Ascending aorta (tissue), 2 donors: ENCODE measurements at regions of chr16 and their contacts with region 1.

Region 1: DNA sequence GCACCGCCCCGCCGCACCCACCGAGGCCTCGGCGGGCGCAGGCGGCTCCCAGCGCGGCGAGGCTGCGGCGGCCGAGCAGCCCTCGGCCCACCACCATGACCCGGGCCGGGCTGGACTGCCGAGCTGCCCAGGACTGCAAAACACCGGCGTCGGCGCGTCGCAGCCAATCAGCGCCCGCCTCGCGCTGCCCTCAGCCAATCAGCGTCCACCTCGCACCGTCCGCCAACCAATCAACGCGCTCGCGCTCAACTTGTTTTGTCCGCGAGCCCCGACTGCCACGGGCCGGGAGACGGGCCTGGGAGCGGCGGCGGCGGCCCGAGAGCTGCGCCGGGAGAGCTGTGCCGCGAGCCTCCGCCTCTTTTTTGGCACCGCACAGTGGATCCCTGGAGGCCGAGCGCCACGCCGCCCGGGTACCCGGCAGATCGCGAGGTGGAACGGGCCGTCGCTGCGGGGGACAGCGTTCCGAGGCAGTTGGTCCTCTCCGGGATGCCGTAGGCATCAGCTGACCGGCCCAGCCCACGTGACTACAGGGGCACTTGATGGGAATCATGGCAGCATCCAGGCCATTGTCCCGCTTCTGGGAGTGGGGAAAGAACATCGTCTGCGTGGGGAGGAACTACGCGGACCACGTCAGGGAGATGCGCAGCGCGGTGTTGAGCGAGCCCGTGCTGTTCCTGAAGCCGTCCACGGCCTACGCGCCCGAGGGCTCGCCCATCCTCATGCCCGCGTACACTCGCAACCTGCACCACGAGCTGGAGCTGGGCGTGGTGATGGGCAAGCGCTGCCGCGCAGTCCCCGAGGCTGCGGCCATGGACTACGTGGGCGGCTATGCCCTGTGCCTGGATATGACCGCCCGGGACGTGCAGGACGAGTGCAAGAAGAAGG is at the starts of genes FAHD1 and HAGH:
- DNase-seq: peak; percentile 73 to 94
- H3K4me3 ChIP-seq: peak within 1 kb of the TSS; percentile 72 to 81
- H3K27ac ChIP-seq: peak within 1 kb of the TSS; percentile 70 to 72
- H3K4me1 ChIP-seq: peaks cover 12 to 37% of the 10 kb centered on the region in 2 donors
- H3K27me3 ChIP-seq: no peaks in the 10 kb centered on the region
- CTCF ChIP-seq: no peak
- total RNA-seq, gene FAHD1: 233 TPM
- total RNA-seq, gene HAGH: 177 TPM

Region 2: GRCh38 chr16:1772736-1773584 is 54.0 kb before region 1 on chr16 and contains the starts of genes EME2 and MRPS34:
- intact Hi-C with region 1: loop called (anchors 2 kb)
- DNase-seq: peak in 1 of 2 donors; percentile 88
- H3K4me3 ChIP-seq: peak within 1 kb of the TSS; percentile 98 to 99
- H3K27ac ChIP-seq: peak within 1 kb of the TSS; percentile 95
- H3K4me1 ChIP-seq: peaks cover 19 to 28% of the 10 kb centered on the region in 2 donors
- H3K27me3 ChIP-seq: no peaks in the 10 kb centered on the region
- CTCF ChIP-seq: peak; percentile 68 to 82 (median 75)
- total RNA-seq, gene EME2: 25.3 TPM
- total RNA-seq, gene MRPS34: 170 TPM

Region 3: GRCh38 chr16:1782352-1783091 is 44.4 kb before region 1 on chr16 and contains the starts of genes NUBP2 and SPSB3:
- intact Hi-C with region 1: loop called (anchors 2 kb)
- DNase-seq: peak; percentile 99 to 100
- H3K4me3 ChIP-seq: peak within 1 kb of the TSS; percentile 84 to 99
- H3K27ac ChIP-seq: peak within 1 kb of the TSS; percentile 77 to 83
- H3K4me1 ChIP-seq: peaks cover 11 to 26% of the 10 kb centered on the region in 2 donors
- H3K27me3 ChIP-seq: no peaks in the 10 kb centered on the region
- CTCF ChIP-seq: no peak
- total RNA-seq, gene NUBP2: 182 TPM
- total RNA-seq, gene SPSB3: 159 TPM

Region 4: GRCh38 chr16:1942810-1943726 is 116.1 kb after region 1 on chr16 and contains the start of gene MSRB1:
- intact Hi-C with region 1: loop called (anchors 1 kb)
- DNase-seq: peak; percentile 99 to 100
- H3K4me3 ChIP-seq: peak within 1 kb of the TSS; percentile 70 to 92
- H3K27ac ChIP-seq: peak within 1 kb of the TSS; percentile 78 to 81
- H3K4me1 ChIP-seq: peaks cover 10 to 11% of the 10 kb centered on the region in 2 donors
- H3K27me3 ChIP-seq: no peaks in the 10 kb centered on the region
- CTCF ChIP-seq: no peak
- total RNA-seq, gene MSRB1: 32.9 TPM

Region 5: GRCh38 chr16:2102471-2102870 is 275.5 kb after region 1 on chr16:
- intact Hi-C with region 1: no loop called
- DNase-seq: no peak
- H3K4me3 ChIP-seq: no peak overlapping the region
- H3K27ac ChIP-seq: no peak overlapping the region
- H3K4me1 ChIP-seq: no peaks in the 10 kb centered on the region
- H3K27me3 ChIP-seq: no peaks in the 10 kb centered on the region
- CTCF ChIP-seq: no peak